A673 (cell line): ENCODE measurements at regions of chr14 and their contacts with region 1.

Region 1: GRCh38 chr14:68985434-68986125 is 6.5 kb upstream of the ACTN1 start:
- DNase-seq: no peak
- H3K4me3 ChIP-seq: no peak overlapping the region
- H3K27ac ChIP-seq: no peak overlapping the region
- H3K4me1 ChIP-seq: no peaks in the 10 kb centered on the region
- H3K27me3 ChIP-seq: no peaks in the 10 kb centered on the region
- CTCF ChIP-seq: no peak

Region 2: DNA sequence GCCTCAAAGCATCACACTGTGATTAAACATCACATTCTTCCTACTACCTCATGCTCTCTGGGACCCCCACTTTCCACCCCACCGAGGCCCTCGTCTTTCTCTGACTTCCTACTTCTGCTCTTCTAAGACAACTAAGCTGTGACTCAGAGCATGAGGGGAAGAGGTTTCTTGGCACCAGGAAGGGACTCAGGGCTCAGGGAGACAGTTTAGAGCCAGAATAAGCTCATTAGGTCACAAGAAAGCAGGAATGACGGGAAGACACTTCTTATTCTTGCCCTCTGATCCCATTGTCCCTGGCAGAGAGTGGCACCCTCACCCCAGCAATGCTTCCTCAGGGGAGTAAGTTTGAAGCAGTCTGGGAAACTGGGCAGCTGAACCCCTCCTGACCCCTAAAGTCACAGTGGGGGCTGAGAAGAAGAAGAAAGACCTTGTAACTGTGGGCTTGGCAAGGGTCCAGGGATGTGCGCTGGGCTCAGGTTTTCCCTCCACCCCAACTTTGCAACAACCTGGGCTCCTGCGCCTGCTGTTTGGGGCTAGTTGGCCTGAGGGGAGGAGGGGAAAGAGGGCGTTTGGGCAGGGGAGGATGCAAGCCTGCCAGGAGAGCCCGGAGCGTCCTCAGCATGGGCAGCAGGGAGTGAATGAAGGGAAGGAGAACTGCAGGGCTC is 58.1 kb after region 1 on chr14:
- CTCF ChIA-PET with region 1: no interaction called
- POLR2A ChIA-PET with region 1: interaction called, 13 read pairs
- intact Hi-C with region 1: no loop called
- DNase-seq: no peak
- H3K4me3 ChIP-seq: no peak overlapping the region
- H3K27ac ChIP-seq: no peak overlapping the region
- H3K4me1 ChIP-seq: peaks cover 10% of the 10 kb centered on the region
- H3K27me3 ChIP-seq: no peaks in the 10 kb centered on the region
- CTCF ChIP-seq: no peak